ENCODE measurements at regions of chr1 and their contacts with region 1.

Region 1: GRCh38 chr1:235328357-235329138 is at the start of gene GGPS1:
- DNase-seq: peak; percentile 95 to 99 (median 97)

Region 2: GRCh38 chr1:235253219-235253962 is 75.2 kb before region 1 on chr1:
- intact Hi-C with region 1: loop called (anchors 10 kb)
- DNase-seq: peak in 41 of 42 donors; percentile 26 to 85 (median 66)

Region 3: DNA sequence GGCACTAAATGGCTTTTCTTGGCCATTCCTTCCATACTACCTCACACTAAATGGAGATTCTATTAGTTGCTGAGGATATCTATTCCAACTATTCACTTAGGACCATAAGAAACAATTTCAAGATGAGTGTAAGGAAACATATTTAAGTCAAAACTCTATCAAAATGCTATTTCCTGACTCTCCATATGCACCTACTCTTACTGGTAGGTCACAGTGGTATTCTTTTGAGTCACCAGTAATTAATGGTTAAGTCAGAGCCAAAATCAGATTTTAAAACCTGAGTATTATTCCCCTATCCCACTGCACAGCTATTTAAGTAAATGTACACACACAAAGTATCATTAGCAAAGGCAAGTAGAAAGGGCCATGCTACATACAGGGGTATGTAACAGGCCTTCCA is 50.8 kb before region 1 on chr1:
- intact Hi-C with region 1: no loop called
- DNase-seq: no peak

Region 4: GRCh38 chr1:235397733-235398132 is 69.2 kb after region 1 on chr1:
- intact Hi-C with region 1: no loop called
- DNase-seq: no peak

Region 5: DNA sequence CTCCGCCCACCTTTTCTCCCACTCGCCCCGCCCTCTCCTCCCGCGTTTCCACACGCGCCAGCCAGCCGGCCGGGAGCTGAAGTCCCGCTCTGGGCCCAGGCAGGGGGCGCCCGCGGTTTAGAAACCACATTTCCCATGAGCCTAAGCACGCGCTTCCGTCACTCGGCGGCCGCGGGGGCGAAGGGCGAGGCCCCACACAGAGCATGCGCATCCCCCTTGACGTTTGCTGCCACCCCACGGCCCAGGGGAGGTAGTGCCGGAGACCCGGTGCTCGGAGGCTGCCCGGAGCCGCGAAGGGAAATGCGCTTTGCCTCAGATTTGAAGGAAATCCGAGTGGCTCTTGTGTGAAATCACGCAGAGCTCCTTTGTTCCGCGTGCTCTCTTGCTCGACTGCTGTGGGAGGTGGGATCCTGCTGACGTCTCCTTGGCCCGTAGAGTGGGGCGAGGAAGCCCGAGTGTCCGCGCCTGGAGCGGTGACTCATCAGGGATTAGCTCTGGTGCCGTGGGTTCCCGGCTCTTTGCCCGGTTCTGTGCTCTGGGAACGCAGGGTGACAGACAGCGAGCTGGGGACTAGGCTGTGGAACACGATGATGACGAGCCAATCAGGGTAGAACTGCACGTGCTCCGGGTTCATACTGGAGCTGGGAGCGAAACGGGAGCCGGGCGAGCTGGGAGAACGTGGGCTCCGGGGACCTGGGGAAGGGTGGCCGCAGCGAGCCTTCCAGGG is 176.1 kb after region 1 on chr1:
- intact Hi-C with region 1: loop called (anchors 10 kb)
- DNase-seq: peak; percentile 97 to 100 (median 99)